Panc1 (cell line): ENCODE measurements at regions of chr2 and their contacts with region 1.

Region 1: DNA sequence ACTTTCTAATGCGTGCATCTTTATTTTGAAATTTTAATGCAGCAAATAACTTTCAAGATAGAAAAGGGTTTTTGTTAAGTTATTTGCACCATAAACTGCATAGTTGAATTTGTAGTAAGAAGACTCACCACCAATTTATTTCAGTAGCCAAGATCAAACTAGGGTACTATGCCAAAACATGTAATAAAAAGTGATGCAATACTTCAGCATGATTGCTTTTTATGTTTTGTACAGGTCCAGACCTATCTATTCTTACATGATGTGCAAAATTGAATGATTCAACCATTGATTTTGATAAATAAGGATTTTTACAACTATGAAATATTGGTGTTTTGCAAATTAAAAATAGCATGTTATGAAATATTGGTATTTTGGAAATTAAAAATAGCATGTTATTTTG is 26.7 kb downstream of the AGPS start:
- DNase-seq: no peak
- ATAC-seq: no peak
- H3K4me3 ChIP-seq: no peak overlapping the region
- H3K27ac ChIP-seq: peak overlapping the region; percentile 78; the same call in 1 of the 2 replicates
- H3K4me1 ChIP-seq: peaks cover 11% of the 10 kb centered on the region; the same call in 1 of the 2 replicates
- H3K27me3 ChIP-seq: no peaks in the 10 kb centered on the region
- CTCF ChIP-seq: no peak

Region 2: GRCh38 chr2:177332041-177332991 is 87.0 kb before region 1 on chr2:
- CTCF ChIA-PET with region 1: interaction called, 14 read pairs
- POLR2A ChIA-PET with region 1: no interaction called
- in situ Hi-C with region 1: no loop called
- intact Hi-C with region 1: loop called (anchors 1 kb)
- DNase-seq: peak; percentile 46
- ATAC-seq: peak; percentile 80
- H3K4me3 ChIP-seq: no peak overlapping the region
- H3K27ac ChIP-seq: peak overlapping the region; percentile 69
- H3K4me1 ChIP-seq: peaks cover 14% of the 10 kb centered on the region
- H3K27me3 ChIP-seq: no peaks in the 10 kb centered on the region
- CTCF ChIP-seq: peak; percentile 77